Activated CD4-positive, alpha-beta T cell treated with anti-CD3 and anti-CD28 coated beads for 36 hours (primary cell): ENCODE measurements at regions of chr15 and their contacts with region 1.

Region 1: GRCh38 chr15:63487076-63487757 is 17.2 kb upstream of the USP3 start:
- DNase-seq: peak; percentile 94
- ATAC-seq: peak; percentile 89
- H3K4me3 Mint-ChIP-seq: peak overlapping the region; percentile 15
- H3K27ac Mint-ChIP-seq: peak overlapping the region; percentile 7
- H3K4me1 Mint-ChIP-seq: peaks cover 61% of the 10 kb centered on the region
- H3K27me3 Mint-ChIP-seq: no peaks in the 10 kb centered on the region

Region 2: DNA sequence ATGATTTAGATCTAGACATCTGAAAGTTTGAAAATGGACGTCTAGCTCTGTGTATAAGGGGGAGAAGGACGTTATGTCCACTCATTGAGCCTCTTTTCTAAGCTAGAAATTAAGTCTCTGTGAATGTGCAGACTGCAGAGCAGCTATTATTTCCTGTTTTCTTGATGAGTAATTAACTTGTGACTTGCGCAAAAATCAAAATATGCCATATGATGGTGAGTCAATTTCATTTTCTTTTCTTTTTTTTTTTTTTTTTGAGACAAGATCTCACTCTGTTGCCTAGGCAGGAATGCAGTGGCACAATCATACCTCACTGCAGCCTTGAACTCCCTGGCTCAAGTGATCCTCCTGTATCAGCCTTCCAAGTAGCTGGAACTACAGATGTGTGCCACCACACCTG is 351.4 kb before region 1 on chr15:
- CTCF ChIA-PET with region 1: no interaction called
- POLR2A ChIA-PET with region 1: no interaction called
- intact Hi-C with region 1: no loop called
- DNase-seq: no peak
- ATAC-seq: peak; percentile 74
- H3K4me3 Mint-ChIP-seq: no peak overlapping the region
- H3K27ac Mint-ChIP-seq: no peak overlapping the region
- H3K4me1 Mint-ChIP-seq: peaks cover 12% of the 10 kb centered on the region
- H3K27me3 Mint-ChIP-seq: no peaks in the 10 kb centered on the region

Region 3: GRCh38 chr15:63497642-63498467 is 10.6 kb after region 1 on chr15:
- CTCF ChIA-PET with region 1: interaction called, 78 read pairs
- POLR2A ChIA-PET with region 1: interaction called, 13 read pairs
- intact Hi-C with region 1: loop called (anchors 1 to 2 kb)
- DNase-seq: peak; percentile 71
- ATAC-seq: peak; percentile 56
- H3K4me3 Mint-ChIP-seq: no peak overlapping the region
- H3K27ac Mint-ChIP-seq: no peak overlapping the region
- H3K4me1 Mint-ChIP-seq: peaks cover 74% of the 10 kb centered on the region
- H3K27me3 Mint-ChIP-seq: no peaks in the 10 kb centered on the region

Region 4: GRCh38 chr15:63514531-63514943 is 27.3 kb after region 1 on chr15:
- CTCF ChIA-PET with region 1: interaction called, 18 read pairs
- POLR2A ChIA-PET with region 1: interaction called, 3 read pairs
- intact Hi-C with region 1: no loop called
- DNase-seq: no peak
- ATAC-seq: no peak
- H3K4me3 Mint-ChIP-seq: peak overlapping the region; percentile 42
- H3K27ac Mint-ChIP-seq: peak overlapping the region; percentile 64
- H3K4me1 Mint-ChIP-seq: peaks cover 91% of the 10 kb centered on the region
- H3K27me3 Mint-ChIP-seq: no peaks in the 10 kb centered on the region

Region 5: GRCh38 chr15:63531586-63531985 is 44.4 kb after region 1 on chr15:
- CTCF ChIA-PET with region 1: interaction called, 11 read pairs
- POLR2A ChIA-PET with region 1: interaction called, 3 read pairs
- intact Hi-C with region 1: no loop called
- DNase-seq: no peak
- ATAC-seq: no peak
- H3K4me3 Mint-ChIP-seq: no peak overlapping the region
- H3K27ac Mint-ChIP-seq: peak overlapping the region; percentile 33
- H3K4me1 Mint-ChIP-seq: peaks cover 91% of the 10 kb centered on the region
- H3K27me3 Mint-ChIP-seq: no peaks in the 10 kb centered on the region

Region 6: DNA sequence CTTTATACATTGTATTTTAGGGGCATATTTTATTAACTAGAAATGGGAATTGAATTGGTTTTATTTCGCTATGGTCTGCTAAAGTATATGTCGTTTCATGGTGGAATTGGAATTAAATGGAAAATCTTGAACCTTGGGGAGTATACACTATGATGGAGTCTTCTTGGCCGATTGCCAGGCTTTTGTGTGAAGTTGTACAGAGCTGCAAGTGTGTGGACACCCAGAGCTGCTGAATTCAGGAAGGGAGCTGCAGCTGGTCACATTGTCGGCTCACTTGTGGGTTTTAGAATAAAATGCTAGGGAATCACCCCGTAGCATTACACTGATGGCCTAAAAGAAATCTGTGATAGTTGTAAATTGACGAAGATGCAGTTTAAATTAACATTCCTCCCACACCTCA is 52.3 kb after region 1 on chr15:
- CTCF ChIA-PET with region 1: interaction called, 11 read pairs
- POLR2A ChIA-PET with region 1: no interaction called
- intact Hi-C with region 1: no loop called
- DNase-seq: no peak
- ATAC-seq: no peak
- H3K4me3 Mint-ChIP-seq: no peak overlapping the region
- H3K27ac Mint-ChIP-seq: no peak overlapping the region
- H3K4me1 Mint-ChIP-seq: peaks cover 60% of the 10 kb centered on the region
- H3K27me3 Mint-ChIP-seq: no peaks in the 10 kb centered on the region